ENCODE measurements at regions of chr19 and their contacts with region 1.

Region 1: DNA sequence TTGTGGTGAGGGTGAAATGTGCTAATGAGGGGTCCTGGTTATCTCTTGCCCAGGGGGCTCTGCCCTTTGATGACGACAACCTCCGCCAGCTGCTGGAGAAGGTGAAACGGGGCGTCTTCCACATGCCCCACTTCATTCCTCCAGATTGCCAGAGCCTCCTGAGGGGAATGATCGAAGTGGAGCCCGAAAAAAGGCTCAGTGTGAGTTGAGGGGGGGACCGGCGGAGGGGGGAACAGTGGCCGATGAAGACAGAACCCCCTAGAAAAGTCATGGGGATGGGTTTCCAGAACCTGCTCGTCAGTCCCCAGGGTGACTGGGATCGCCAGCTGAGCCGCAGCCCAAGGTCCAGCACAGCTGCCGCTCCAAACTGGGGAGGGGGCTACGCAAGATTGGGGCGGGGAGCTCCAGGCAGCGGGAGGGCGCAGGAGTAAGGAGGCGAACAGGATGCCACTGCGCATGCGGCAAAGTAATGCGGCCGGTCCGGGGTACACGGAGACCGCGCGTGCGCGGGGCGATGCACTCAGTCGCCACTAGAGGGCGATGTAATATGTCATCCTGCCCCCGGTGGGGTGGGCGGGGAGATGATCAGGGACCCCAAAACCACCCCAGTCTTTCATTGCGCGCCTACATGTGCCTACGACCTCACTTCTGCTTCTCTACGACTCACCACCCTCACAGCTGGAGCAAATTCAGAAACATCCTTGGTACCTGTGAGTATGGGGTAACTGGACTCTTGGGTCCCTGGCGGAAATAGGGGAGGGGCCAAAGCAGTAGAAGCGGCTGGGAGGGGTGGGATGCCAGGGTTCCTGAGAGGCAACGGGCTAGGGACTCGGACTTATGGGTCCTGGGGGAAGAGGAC is 17.9 kb downstream of the BRSK1 start:
- DNase-seq: peak; percentile 88 to 92 (median 90)
- ATAC-seq: peak; percentile 87
- H3K4me3 ChIP-seq: no peak overlapping the region
- H3K27ac ChIP-seq: no peak overlapping the region
- H3K4me1 ChIP-seq: peaks cover 10% of the 10 kb centered on the region
- H3K27me3 ChIP-seq: no peaks in the 10 kb centered on the region
- CTCF ChIP-seq: peak; percentile 91 to 97 (median 96)
- POLR2A ChIP-seq: no peak

Region 2: GRCh38 chr19:55385740-55386529 is 84.2 kb after region 1 on chr19 and contains the start of gene RPL28:
- intact Hi-C with region 1: loop called (anchors 10 kb)
- DNase-seq: peak; percentile 98 to 99 (median 98)
- ATAC-seq: peak; percentile 87
- H3K4me3 ChIP-seq: peak within 1 kb of the TSS; percentile 84 to 98
- H3K27ac ChIP-seq: peak within 1 kb of the TSS; percentile 84 to 96 (median 94)
- H3K4me1 ChIP-seq: peaks cover 54% of the 10 kb centered on the region
- H3K27me3 ChIP-seq: no peaks in the 10 kb centered on the region
- CTCF ChIP-seq: no peak
- POLR2A ChIP-seq: peak; percentile 92 to 100 (median 99)
- total RNA-seq, gene RPL28: 113 to 268 TPM

Measured in body of pancreas (tissue), 4 donors.